Activated CD8-positive, alpha-beta T cell treated with anti-CD3 and anti-CD28 coated beads for 36 hours (primary cell): ENCODE measurements at regions of chr6 and their contacts with region 1.

Region 1: DNA sequence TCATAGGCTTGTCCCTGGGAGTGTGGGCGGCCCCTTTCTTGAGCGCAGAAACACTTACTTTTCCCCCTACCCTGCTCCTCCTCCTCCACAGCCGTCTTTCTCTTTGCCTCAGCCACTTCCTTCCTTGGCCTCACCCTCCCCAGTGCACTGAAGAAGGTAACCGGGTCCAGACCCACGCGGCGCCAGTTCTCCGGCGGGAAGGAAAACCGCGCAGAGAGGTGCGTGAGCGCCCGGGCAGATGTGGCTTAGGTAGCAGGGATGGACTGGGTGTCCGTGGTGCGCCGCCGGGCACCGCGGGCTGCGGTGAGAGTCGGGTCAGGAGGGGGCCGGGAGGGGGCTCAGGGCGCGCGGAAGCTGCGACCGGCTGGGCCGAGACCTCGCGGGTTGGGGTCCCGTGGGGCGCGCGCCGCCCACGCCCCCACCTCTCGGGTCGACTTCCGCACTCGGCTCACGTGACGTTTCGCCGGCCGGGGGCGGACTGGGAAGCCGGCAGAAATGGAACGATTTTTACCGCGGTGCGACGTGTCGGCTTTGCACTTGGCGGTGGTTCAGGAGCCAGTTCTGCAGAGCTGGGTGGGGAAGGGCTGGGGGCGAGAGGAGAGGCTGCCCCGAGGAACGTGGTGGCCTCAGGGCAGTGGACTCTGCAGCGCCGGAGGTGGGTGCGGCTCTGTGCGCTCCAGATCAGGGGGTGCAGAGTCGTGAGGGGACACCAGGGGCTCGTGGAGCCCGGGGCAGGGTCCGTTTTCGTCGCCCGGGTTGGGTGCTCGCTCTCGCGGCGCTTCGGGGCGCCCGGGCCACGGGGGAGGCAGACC is at the start of gene ABRACL:
- DNase-seq: peak; percentile 95
- ATAC-seq: peak; percentile 82
- H3K4me3 Mint-ChIP-seq: no peak within 1 kb of the TSS
- H3K27ac Mint-ChIP-seq: peak within 1 kb of the TSS; percentile 98
- H3K4me1 Mint-ChIP-seq: peaks cover 24% of the 10 kb centered on the region
- H3K27me3 Mint-ChIP-seq: no peaks in the 10 kb centered on the region
- CTCF ChIP-seq: no peak
- total RNA-seq, gene ABRACL: 147 to 155 TPM

Region 2: DNA sequence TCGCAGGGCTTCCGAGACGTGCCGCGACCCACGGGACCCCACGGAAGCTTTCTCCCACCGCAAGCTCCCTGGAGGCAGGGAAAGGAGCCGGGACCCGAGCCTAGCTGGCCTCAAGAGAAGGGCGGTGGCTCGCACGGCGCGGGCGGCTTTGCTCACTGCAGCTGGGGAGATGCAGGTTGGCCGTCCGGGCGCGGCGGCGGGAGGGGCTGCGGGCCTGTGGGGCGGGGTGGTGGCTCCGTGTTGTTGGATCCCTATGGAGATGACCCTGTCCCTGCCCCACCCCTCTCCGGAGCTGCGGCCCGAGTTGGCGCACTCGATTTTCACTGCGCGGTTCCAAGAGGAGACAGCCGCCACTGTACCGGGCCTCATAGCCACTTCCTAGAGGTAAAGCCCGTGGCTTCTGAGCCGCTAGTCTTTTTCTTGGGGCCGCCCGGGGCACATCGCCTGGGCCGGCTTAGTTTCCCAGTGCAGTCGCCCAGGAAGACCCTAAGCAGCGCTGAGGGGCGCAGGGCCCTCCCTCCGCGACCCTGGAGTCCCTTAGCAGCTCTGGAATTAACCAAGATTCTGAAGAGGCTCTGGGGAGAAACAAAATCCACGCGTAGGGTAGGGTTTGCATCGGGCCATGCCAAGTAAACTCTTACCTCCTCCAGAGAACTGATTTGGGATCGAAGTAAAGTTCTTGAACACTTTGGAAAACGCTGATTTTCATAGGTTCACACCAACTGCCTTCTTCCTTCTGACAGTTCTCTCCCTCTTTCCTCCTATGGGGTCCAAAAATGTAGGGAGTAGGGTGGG is 232.9 kb before region 1 on chr6 and contains the start of gene ECT2L:
- CTCF ChIA-PET with region 1: no interaction called
- POLR2A ChIA-PET with region 1: no interaction called
- intact Hi-C with region 1: no loop called
- DNase-seq: no peak
- ATAC-seq: no peak
- H3K4me3 Mint-ChIP-seq: no peak within 1 kb of the TSS
- H3K27ac Mint-ChIP-seq: no peak within 1 kb of the TSS
- H3K4me1 Mint-ChIP-seq: peaks cover 5% of the 10 kb centered on the region
- H3K27me3 Mint-ChIP-seq: peaks cover 11% of the 10 kb centered on the region
- CTCF ChIP-seq: no peak
- total RNA-seq, gene ECT2L: not detected

Region 3: DNA sequence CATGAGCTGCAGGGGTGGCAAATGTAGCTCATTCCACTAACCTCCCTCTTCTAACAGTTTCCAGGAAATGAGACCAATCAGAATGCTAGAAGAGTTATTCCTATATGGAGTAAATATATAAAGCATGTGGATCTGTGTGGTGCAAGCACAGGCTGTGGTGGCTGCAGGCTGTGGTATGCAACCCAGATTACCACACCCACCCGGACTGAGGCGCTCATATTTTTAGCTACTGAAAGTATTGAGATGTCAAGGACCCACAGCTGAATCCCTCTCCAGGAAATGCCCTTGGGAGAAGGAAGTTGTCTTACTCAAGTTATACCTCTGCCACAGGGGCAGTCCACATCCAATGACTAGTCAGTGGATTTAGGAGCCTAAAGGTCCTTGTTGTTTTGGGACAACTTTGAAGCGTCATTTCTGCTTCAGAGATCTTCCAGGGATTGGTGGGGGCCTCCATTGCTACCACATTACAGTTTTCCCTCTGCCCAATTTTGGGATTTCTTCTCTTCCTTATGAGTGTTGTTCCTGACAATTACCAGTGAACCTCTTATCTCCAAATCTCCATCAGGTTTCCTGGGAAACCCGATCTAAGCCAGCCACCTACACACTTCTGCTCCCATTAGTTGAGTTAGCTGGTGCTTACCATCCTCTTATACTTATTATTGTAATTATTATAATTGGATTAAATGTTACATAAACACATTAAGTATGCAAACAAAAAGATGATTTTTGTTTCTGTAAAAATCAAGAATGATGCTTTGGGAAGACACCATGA is 28.7 kb before region 1 on chr6:
- CTCF ChIA-PET with region 1: no interaction called
- POLR2A ChIA-PET with region 1: no interaction called
- intact Hi-C with region 1: no loop called
- DNase-seq: no peak
- ATAC-seq: no peak
- H3K4me3 Mint-ChIP-seq: no peak overlapping the region
- H3K27ac Mint-ChIP-seq: no peak overlapping the region
- H3K4me1 Mint-ChIP-seq: no peaks in the 10 kb centered on the region
- H3K27me3 Mint-ChIP-seq: no peaks in the 10 kb centered on the region
- CTCF ChIP-seq: no peak

Region 4: GRCh38 chr6:139112146-139112545 is 83.3 kb after region 1 on chr6:
- CTCF ChIA-PET with region 1: interaction called, 4 read pairs
- POLR2A ChIA-PET with region 1: interaction called, 3 read pairs
- intact Hi-C with region 1: loop called (anchors 5 kb)
- DNase-seq: no peak
- ATAC-seq: no peak
- H3K4me3 Mint-ChIP-seq: no peak overlapping the region
- H3K27ac Mint-ChIP-seq: no peak overlapping the region
- H3K4me1 Mint-ChIP-seq: peaks cover 74% of the 10 kb centered on the region
- H3K27me3 Mint-ChIP-seq: no peaks in the 10 kb centered on the region
- CTCF ChIP-seq: no peak

Region 5: GRCh38 chr6:139146317-139146726 is 117.5 kb after region 1 on chr6:
- CTCF ChIA-PET with region 1: no interaction called
- POLR2A ChIA-PET with region 1: interaction called, 16 read pairs
- intact Hi-C with region 1: no loop called
- DNase-seq: peak; percentile 55
- ATAC-seq: peak; percentile 69
- H3K4me3 Mint-ChIP-seq: peak overlapping the region; percentile 50
- H3K27ac Mint-ChIP-seq: peak overlapping the region; percentile 89
- H3K4me1 Mint-ChIP-seq: peaks cover 92% of the 10 kb centered on the region
- H3K27me3 Mint-ChIP-seq: no peaks in the 10 kb centered on the region
- CTCF ChIP-seq: no peak